Activated CD4-positive, alpha-beta memory T cell treated with anti-CD3 and anti-CD28 coated beads for 36 hours (primary cell): ENCODE measurements at regions of chr1 and their contacts with region 1.

Region 1: DNA sequence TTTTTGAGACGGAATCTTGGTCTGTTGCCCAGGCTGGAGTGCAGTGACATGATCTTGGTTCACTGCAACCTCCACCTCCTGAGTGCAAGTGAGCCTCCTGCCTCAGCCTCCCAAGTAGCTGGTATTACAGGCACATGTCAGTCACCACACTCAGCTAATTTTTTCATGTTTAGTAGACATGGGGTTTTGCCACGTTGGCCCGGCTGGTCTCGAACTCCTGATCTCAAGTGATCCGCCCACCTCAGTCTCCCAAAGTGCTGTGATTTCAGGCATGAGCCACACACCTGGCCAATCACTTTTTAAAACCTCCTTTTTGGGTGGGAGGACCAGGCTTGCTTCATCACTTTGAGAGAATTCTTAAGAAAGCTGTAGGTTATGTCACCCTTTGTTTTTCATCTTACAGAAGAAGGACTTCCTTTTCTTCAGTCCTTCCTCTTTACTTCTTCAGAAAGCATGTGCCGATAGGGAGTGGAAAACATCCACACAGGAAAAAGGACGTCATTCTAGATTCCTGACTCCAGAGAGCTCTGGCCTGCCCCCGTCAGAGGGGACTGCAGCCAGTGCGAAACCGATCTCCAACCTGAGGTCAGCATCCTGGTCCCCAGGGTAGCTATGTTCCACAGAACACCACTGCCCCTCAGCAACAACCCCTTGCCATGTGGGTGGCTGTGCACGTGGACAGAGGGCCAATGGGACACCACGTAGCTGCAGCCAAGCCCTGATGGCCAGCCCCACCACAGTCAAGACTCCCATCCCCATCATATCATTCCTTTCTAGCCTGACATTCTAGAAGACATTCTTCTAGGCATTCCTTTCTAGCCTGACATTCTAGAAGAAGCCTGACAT is 21.9 kb downstream of the NCF2 start:
- DNase-seq: peak; percentile 45
- H3K4me3 Mint-ChIP-seq: no peak overlapping the region
- H3K27ac Mint-ChIP-seq: peak overlapping the region; percentile 69
- H3K4me1 Mint-ChIP-seq: peaks cover 22% of the 10 kb centered on the region
- H3K27me3 Mint-ChIP-seq: no peaks in the 10 kb centered on the region

Region 2: GRCh38 chr1:183444243-183444642 is 124.2 kb before region 1 on chr1:
- CTCF ChIA-PET with region 1: no interaction called
- POLR2A ChIA-PET with region 1: no interaction called
- intact Hi-C with region 1: no loop called
- DNase-seq: no peak
- H3K4me3 Mint-ChIP-seq: no peak overlapping the region
- H3K27ac Mint-ChIP-seq: no peak overlapping the region
- H3K4me1 Mint-ChIP-seq: no peaks in the 10 kb centered on the region
- H3K27me3 Mint-ChIP-seq: peaks cover 2% of the 10 kb centered on the region

Region 3: DNA sequence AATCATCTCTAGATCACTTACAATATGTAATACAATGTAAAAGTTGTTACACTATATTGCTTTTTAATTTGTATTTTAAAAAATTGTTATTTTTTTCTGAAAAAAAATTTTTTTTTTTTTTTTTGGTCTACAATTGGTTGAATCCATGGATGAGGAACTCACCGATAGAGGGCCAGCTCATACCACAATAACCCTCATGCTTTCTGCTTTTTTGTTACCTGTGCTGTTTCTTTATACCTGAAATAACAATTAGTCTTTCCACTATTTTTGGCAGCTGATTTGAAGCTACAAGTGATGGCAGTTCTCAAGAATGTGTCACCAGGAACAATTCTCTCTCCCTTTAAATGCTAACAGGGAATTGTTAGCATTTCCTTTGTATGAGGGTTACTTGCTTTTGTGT is 84.1 kb before region 1 on chr1:
- CTCF ChIA-PET with region 1: no interaction called
- POLR2A ChIA-PET with region 1: no interaction called
- intact Hi-C with region 1: no loop called
- DNase-seq: no peak
- H3K4me3 Mint-ChIP-seq: no peak overlapping the region
- H3K27ac Mint-ChIP-seq: no peak overlapping the region
- H3K4me1 Mint-ChIP-seq: peaks cover 61% of the 10 kb centered on the region
- H3K27me3 Mint-ChIP-seq: no peaks in the 10 kb centered on the region

Region 4: GRCh38 chr1:183580281-183580682 is 11.9 kb after region 1 on chr1:
- CTCF ChIA-PET with region 1: interaction called, 4 read pairs
- POLR2A ChIA-PET with region 1: interaction called, 3 read pairs
- intact Hi-C with region 1: loop called (anchors 1 kb)
- DNase-seq: no peak
- H3K4me3 Mint-ChIP-seq: no peak overlapping the region
- H3K27ac Mint-ChIP-seq: no peak overlapping the region
- H3K4me1 Mint-ChIP-seq: peaks cover 10% of the 10 kb centered on the region
- H3K27me3 Mint-ChIP-seq: no peaks in the 10 kb centered on the region